AG04449 (cell line): ENCODE measurements at regions of chr14 and their contacts with region 1.

Region 1: GRCh38 chr14:44912041-44912869 is 49.5 kb downstream of the KLHL28 start:
- DNase-seq: no peak
- H3K4me3 ChIP-seq: peak overlapping the region; percentile 43
- CTCF ChIP-seq: no peak

Region 2: GRCh38 chr14:44830371-44830770 is 81.9 kb before region 1 on chr14:
- CTCF ChIA-PET with region 1: no interaction called
- POLR2A ChIA-PET with region 1: no interaction called
- DNase-seq: no peak
- H3K4me3 ChIP-seq: no peak overlapping the region
- CTCF ChIP-seq: no peak

Region 3: DNA sequence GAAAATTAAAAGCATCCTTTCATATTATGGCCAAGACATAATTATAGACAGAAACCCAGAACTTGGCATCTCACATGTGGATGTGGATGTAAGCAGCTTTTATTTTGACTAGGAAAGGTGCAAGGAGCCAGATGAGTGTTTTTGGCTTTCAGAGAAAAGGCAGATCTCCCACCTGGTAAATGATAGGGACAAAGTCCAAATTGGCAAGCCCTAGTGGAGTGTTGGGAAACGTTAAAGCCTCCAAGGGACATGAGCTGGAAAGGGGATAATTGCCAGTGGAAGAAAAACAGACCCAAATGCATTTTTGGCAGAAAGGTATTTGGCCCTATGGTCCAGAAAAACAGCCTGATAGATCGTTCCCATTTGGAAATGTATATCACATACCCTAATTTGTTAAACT is 10.6 kb before region 1 on chr14:
- CTCF ChIA-PET with region 1: interaction called, 31 read pairs
- POLR2A ChIA-PET with region 1: interaction called, 6 read pairs
- DNase-seq: no peak
- H3K4me3 ChIP-seq: no peak overlapping the region
- CTCF ChIP-seq: no peak

Region 4: DNA sequence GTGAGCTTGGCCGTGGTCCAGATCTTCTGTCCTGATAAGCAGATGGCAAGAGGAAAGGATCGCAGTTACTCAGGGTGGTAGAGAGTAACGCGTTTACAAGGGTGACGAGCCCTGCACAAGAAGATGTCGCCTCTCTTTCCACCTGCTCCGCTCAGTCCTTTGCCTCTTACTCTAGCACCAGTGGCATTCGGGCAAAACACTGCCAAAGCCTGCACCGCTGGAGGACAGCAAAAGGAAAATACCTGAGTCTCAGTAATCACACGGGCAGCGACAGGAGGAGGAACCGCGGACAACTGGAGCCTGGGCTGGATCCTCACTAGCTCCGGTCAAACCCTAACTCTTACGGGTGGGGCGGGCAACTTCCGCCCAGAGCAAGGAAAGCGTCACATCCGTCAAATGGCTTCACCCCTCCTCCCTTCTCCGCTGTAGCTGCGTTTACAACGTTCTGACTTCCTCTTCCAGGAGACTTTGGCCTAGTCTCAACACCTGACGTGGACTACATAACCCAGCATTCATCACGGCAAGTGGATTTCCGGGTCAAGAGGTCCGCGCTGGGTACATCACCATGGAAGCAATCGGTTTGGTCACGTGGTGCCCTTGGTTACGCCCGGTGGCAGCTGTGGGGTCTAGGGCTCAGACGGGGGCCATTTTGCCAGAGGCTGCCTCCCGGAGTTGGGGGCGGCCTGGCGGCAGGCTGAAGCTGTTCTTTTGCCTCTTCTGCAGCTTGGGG is 49.5 kb after region 1 on chr14 and contains the starts of genes KLHL28 and TOGARAM1:
- CTCF ChIA-PET with region 1: interaction called, 26 read pairs
- POLR2A ChIA-PET with region 1: interaction called, 3 read pairs
- DNase-seq: peak; percentile 98
- H3K4me3 ChIP-seq: peak within 1 kb of the TSS; percentile 93
- CTCF ChIP-seq: no peak

Region 5: DNA sequence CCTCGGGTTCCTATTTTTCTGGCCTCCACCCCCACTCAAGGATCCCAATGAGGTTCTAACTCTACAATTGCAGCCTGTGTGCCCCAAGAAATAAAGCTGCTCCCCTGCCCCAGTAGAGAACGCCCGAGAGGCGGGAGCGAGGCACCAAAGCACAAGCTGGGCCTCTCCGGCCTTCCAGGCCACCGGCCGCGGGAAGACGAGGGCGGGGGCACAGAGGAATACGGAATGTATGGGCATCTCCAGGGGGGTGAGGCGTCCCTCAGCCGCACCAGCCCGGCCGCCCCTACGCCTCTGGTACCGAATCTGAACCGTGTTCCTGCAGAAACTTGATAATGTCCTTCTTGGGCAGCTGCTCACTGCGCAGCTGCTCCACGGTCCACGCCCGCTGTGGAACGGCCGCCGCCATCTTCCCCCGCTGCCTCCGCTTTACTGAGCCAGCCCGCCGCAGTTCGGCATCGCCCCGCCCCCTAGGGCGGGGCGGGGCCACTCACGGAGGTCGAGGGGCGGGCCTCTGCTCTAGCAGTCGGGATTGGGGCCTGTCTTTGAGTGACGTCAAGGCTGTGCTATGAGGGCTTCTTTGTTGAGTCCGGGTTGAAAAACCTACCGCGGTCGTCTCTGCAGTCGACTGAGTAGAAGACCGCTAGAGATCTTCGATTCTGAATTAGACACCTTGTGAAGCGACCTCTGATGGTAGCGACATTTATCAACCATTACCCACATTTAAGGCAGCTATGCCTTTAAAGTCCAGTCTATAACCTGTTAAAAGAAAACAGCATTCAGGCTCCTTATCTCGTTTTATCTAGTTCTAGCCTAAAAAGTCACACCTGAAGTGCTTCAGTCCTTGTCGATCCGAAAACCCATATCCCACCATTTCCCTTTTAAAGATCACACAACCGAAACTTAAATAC is 222.1 kb after region 1 on chr14 and contains the start of gene FKBP3:
- CTCF ChIA-PET with region 1: interaction called, 11 read pairs
- POLR2A ChIA-PET with region 1: no interaction called
- DNase-seq: peak; percentile 90
- H3K4me3 ChIP-seq: peak within 1 kb of the TSS; percentile 85
- CTCF ChIP-seq: no peak